ENCODE measurements at regions of chr12 and their contacts with region 1.

Region 1: GRCh38 chr12:50504798-50505385 is at the start of gene DIP2B:
- DNase-seq: peak; percentile 94
- H3K4me3 Mint-ChIP-seq: peak within 1 kb of the TSS; percentile 77
- H3K27ac Mint-ChIP-seq: peak within 1 kb of the TSS; percentile 85
- H3K4me1 Mint-ChIP-seq: peaks cover 25% of the 10 kb centered on the region
- H3K27me3 Mint-ChIP-seq: no peaks in the 10 kb centered on the region
- CTCF ChIP-seq: peak; percentile 71
- total RNA-seq, gene DIP2B: 22.8 and 24.5 TPM in 2 replicates

Region 2: GRCh38 chr12:50353869-50354593 is 150.9 kb before region 1 on chr12:
- CTCF ChIA-PET with region 1: no interaction called
- intact Hi-C with region 1: no loop called
- DNase-seq: no peak
- H3K4me3 Mint-ChIP-seq: no peak overlapping the region
- H3K27ac Mint-ChIP-seq: no peak overlapping the region
- H3K4me1 Mint-ChIP-seq: no peaks in the 10 kb centered on the region
- H3K27me3 Mint-ChIP-seq: no peaks in the 10 kb centered on the region
- CTCF ChIP-seq: no peak

Region 3: DNA sequence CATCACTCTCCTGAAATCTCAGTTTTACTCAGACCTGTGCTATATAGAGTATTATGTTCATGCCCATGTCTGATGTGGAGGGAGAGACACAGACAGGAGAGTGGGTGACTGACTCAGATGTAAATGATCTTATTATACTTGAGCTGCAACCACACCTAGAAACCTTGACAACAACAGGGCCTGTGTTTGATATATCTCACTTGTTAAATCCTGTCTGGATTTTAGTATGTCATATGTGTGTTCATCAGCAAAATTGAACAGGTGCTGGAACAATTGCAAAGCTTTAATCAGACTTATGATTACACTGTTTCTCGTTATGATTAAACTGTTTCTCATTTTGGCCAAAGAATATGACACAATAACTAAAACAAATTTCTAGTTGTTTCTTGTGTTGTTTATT is 37.6 kb after region 1 on chr12:
- CTCF ChIA-PET with region 1: interaction called, 6 read pairs
- intact Hi-C with region 1: loop called (anchors 5 kb)
- DNase-seq: peak; percentile 32
- H3K4me3 Mint-ChIP-seq: no peak overlapping the region
- H3K27ac Mint-ChIP-seq: peak overlapping the region; percentile 78
- H3K4me1 Mint-ChIP-seq: peaks cover 29% of the 10 kb centered on the region
- H3K27me3 Mint-ChIP-seq: no peaks in the 10 kb centered on the region
- CTCF ChIP-seq: no peak

Region 4: GRCh38 chr12:50637870-50638481 is 133.1 kb after region 1 on chr12:
- CTCF ChIA-PET with region 1: interaction called, 10 read pairs
- intact Hi-C with region 1: loop called (anchors 2 kb)
- DNase-seq: no peak
- H3K4me3 Mint-ChIP-seq: no peak overlapping the region
- H3K27ac Mint-ChIP-seq: no peak overlapping the region
- H3K4me1 Mint-ChIP-seq: peaks cover 28% of the 10 kb centered on the region
- H3K27me3 Mint-ChIP-seq: no peaks in the 10 kb centered on the region
- CTCF ChIP-seq: peak; percentile 17

Region 5: DNA sequence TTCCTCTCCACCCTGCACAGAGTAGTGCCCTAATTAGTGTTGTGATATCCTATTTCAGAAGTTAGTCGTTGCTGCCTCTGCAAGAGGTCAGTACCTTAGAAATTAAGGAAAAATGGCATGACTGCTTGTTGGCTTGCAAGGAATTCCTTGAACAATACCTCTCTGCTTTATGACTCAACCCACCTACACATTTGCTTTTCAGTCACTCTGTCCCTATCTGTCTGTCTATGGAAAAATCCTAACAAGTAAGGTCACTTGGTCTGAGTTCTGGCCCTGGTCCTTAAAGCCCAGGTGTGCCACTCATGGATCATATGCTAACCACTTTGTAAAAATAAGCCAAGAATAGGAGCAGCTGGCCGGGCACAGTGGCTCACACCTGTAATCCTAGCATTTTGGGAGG is 142.6 kb after region 1 on chr12:
- CTCF ChIA-PET with region 1: interaction called, 11 read pairs
- intact Hi-C with region 1: no loop called
- DNase-seq: no peak
- H3K4me3 Mint-ChIP-seq: no peak overlapping the region
- H3K27ac Mint-ChIP-seq: no peak overlapping the region
- H3K4me1 Mint-ChIP-seq: peaks cover 1% of the 10 kb centered on the region
- H3K27me3 Mint-ChIP-seq: no peaks in the 10 kb centered on the region
- CTCF ChIP-seq: no peak

Region 6: DNA sequence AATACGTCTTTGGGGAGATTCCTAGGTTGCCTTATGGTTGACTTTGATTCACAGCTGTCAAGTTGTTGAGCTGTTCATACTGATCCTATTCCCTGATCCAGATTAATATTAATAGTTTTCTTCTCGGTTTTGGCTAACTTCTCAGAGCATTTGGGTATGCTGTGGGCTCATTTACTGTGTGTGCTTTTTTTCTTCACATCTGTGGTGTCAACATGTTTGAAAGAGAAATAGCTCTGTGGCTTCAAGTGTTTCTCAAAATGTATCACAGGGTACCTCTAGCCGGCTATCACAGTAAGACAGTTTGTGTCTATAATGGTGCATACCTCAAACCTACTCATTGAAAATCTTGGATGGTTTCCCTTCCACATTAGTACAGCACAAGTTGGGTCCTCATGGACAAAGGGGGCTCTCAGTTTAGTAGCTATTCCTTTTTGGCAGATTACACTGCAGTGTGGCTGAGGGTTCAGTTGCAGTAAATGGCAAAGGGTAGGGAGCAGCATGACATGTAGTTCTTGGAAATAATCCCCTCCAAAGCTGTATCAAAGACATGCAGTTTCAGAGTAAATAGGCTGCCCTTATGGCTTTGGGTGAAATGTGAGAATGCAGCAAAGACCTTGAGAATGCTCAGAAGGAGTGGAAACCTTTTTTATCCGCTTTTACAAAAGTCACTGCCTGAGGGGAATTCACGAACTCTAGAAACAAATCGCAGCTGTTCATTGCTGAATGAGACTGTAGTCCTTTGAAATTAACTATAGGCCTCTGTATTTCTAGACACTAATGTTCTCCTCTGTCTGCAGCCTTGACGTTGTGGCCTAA is 156.6 kb after region 1 on chr12:
- CTCF ChIA-PET with region 1: interaction called, 22 read pairs
- intact Hi-C with region 1: no loop called
- DNase-seq: no peak
- H3K4me3 Mint-ChIP-seq: no peak overlapping the region
- H3K27ac Mint-ChIP-seq: no peak overlapping the region
- H3K4me1 Mint-ChIP-seq: peaks cover 8% of the 10 kb centered on the region
- H3K27me3 Mint-ChIP-seq: no peaks in the 10 kb centered on the region
- CTCF ChIP-seq: no peak

Region 7: DNA sequence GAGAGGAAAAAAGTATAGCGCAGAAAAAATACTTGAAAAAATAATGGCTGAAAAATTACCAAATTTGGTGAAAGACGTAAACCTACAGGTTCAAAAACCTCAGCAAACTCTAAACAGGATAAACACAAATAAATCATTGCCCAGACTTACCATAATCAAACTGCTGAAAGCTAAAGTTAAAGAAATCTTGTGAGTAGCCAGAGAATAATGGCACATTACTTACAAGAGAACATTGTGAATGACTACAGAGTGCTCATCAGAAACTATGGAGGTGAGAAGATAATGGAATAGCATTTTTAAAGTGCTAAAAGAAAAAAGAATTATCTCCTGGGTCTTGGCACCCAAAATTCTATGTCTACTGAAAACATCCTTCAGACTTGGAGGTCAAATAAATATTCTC is 295.0 kb after region 1 on chr12:
- CTCF ChIA-PET with region 1: no interaction called
- intact Hi-C with region 1: no loop called
- DNase-seq: no peak
- H3K4me3 Mint-ChIP-seq: no peak overlapping the region
- H3K27ac Mint-ChIP-seq: no peak overlapping the region
- H3K4me1 Mint-ChIP-seq: no peaks in the 10 kb centered on the region
- H3K27me3 Mint-ChIP-seq: no peaks in the 10 kb centered on the region
- CTCF ChIP-seq: no peak

Region 8: GRCh38 chr12:50924439-50925341 is 419.8 kb after region 1 on chr12:
- CTCF ChIA-PET with region 1: no interaction called
- intact Hi-C with region 1: no loop called
- DNase-seq: peak; percentile 60
- H3K4me3 Mint-ChIP-seq: peak overlapping the region; percentile 72
- H3K27ac Mint-ChIP-seq: no peak overlapping the region
- H3K4me1 Mint-ChIP-seq: peaks cover 25% of the 10 kb centered on the region
- H3K27me3 Mint-ChIP-seq: no peaks in the 10 kb centered on the region
- CTCF ChIP-seq: no peak

Region 9: GRCh38 chr12:51334764-51335163 is 829.9 kb after region 1 on chr12:
- CTCF ChIA-PET with region 1: no interaction called
- intact Hi-C with region 1: no loop called
- DNase-seq: no peak
- H3K4me3 Mint-ChIP-seq: no peak overlapping the region
- H3K27ac Mint-ChIP-seq: no peak overlapping the region
- H3K4me1 Mint-ChIP-seq: no peaks in the 10 kb centered on the region
- H3K27me3 Mint-ChIP-seq: no peaks in the 10 kb centered on the region
- CTCF ChIP-seq: no peak

Measured in Calu3 (cell line).